K562 (cell line): ENCODE measurements at regions of chr21 and their contacts with region 1.

Region 1: DNA sequence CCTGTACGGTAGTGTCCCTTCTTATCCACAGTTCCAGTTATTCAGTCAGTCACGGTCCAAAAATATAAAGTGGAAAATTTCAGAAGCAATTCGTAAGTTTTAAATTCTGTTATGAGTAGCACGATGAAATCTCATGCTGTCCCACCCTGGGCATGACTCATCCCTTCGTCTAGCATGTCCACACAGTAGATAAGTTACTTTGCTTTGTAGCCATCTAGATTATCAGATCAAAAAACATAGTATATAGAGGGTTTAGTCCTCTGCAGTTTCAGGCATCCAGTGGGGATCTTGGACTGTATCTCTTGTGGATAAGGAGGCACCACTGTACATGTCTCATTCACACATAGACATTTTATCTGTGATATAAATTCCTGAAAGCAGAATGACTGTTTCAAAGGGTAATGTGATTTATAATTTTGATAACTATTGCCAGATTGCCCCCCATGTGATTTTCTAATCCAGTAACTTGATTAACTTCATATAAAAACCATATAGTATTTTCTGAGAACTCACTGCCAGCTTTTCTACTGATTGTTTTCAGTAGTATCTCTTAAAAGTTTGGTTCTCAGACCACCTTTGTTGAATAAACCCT is 143.3 kb downstream of the DYRK1A start:
- DNase-seq: peak in 2 of 4 experiments; percentile 35 to 63
- ATAC-seq: peak; percentile 68
- H3K4me3 ChIP-seq: no peak overlapping the region
- H3K27ac ChIP-seq: peak overlapping the region; percentile 51; the same call in 2 of the 3 replicates
- H3K4me1 ChIP-seq: peaks cover 4 to 17% of the 10 kb centered on the region in 2 experiments; a peak in 3 of 5 replicates
- H3K27me3 ChIP-seq: no peaks in the 10 kb centered on the region
- CTCF ChIP-seq: no peak
- EP300 ChIP-seq: peak; percentile 30; the same call in 1 of the 2 replicates
- POLR2A ChIP-seq: no peak
- RAD21 ChIP-seq: no peak

Region 2: GRCh38 chr21:37297364-37297763 is 212.5 kb before region 1 on chr21:
- CTCF ChIA-PET with region 1: no interaction called
- POLR2A ChIA-PET with region 1: no interaction called
- in situ Hi-C with region 1: no loop called
- intact Hi-C with region 1: no loop called
- DNase-seq: peak in 1 of 4 experiments; percentile 5
- ATAC-seq: peak; percentile 22; the same call in 1 of the 3 replicates
- H3K4me3 ChIP-seq: no peak overlapping the region
- H3K27ac ChIP-seq: no peak overlapping the region
- H3K4me1 ChIP-seq: no peaks in the 10 kb centered on the region
- H3K27me3 ChIP-seq: peaks cover 0 to 11% of the 10 kb centered on the region in 2 experiments; a peak in 2 of 5 replicates
- CTCF ChIP-seq: no peak
- EP300 ChIP-seq: no peak
- POLR2A ChIP-seq: no peak
- RAD21 ChIP-seq: no peak

Region 3: DNA sequence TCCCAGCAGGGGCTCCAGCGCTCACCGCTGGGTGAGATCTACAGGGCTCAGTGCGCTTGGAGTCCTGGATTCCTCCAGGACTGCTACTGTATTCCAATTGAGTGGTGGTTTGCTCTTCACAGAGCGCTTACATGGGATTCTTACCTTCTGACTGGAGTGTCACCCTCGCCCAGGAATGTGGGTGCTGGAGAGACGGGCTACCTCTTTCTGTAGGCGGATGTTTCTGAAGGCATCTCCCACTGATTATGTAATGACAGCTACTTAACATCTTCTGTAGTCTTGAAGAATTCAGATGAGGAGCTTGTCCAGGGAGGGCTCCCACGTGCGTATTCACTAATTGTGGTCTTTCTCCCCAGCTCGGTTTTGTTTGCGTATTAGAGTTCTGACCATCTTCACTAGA is 10.9 kb after region 1 on chr21:
- CTCF ChIA-PET with region 1: no interaction called
- POLR2A ChIA-PET with region 1: interaction called, 10 read pairs
- in situ Hi-C with region 1: no loop called
- intact Hi-C with region 1: no loop called
- DNase-seq: no peak
- ATAC-seq: no peak
- H3K4me3 ChIP-seq: no peak overlapping the region
- H3K27ac ChIP-seq: no peak overlapping the region
- H3K4me1 ChIP-seq: no peaks in the 10 kb centered on the region; a peak in 1 of 5 replicates
- H3K27me3 ChIP-seq: no peaks in the 10 kb centered on the region
- CTCF ChIP-seq: no peak
- EP300 ChIP-seq: no peak
- POLR2A ChIP-seq: no peak
- RAD21 ChIP-seq: no peak

Region 4: DNA sequence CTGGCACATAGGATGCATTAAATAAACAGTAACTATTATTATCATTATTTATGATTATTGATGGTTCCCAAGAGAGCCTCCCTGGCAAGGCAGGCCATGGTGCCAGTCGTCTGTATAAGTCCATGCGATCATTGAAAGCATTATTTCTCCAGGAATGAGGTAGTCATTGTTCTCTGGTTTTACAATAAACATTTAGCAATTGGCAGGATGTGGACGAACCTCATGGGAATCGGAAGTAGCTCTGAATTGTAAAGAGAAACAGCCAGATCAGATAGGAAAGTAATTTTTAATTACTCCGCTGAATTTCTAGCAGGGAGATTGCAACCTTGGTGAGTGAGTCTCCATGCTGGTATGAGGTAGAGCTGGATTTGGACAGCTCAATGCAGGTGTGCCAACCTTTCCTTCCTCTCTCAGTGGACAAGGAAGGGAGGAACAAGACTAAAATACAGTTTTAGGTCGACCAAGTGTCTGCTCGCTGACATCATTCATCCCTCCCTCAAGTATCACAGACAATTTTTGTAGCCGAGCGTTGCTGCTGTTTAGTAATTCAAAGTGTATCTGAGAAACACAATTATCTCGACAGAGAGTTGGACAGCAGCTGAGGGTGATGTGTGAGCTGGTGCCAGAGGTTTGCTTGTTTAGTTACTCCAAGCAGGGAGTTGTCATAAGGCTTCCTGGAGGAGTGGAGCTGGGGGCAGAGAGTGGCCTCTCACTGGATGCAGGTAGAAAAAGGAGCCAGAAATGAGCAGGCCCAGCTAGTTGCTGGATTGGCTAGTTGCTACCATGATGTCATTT is 155.5 kb after region 1 on chr21:
- CTCF ChIA-PET with region 1: no interaction called
- POLR2A ChIA-PET with region 1: no interaction called
- in situ Hi-C with region 1: no loop called
- intact Hi-C with region 1: no loop called
- DNase-seq: no peak
- ATAC-seq: peak; percentile 43; the same call in 2 of the 3 replicates
- H3K4me3 ChIP-seq: no peak overlapping the region
- H3K27ac ChIP-seq: no peak overlapping the region
- H3K4me1 ChIP-seq: peaks cover 0 to 2% of the 10 kb centered on the region in 2 experiments; a peak in 1 of 5 replicates
- H3K27me3 ChIP-seq: peaks cover 21 to 32% of the 10 kb centered on the region in 2 experiments
- CTCF ChIP-seq: no peak
- EP300 ChIP-seq: no peak
- POLR2A ChIP-seq: no peak
- RAD21 ChIP-seq: no peak